Posterior cingulate gyrus (tissue), 11 donors: ENCODE measurements at regions of chr14 and their contacts with region 1.

Region 1: GRCh38 chr14:92121670-92122350 is at the starts of genes CPSF2 and NDUFB1:
- DNase-seq: peak; percentile 83 to 98 (median 88)

Region 2: GRCh38 chr14:92106143-92106926 is 15.5 kb before region 1 on chr14 and contains the start of gene ATXN3:
- intact Hi-C with region 1: loop called (anchors 1 kb)
- DNase-seq: peak; percentile 95 to 99 (median 99)

Region 3: DNA sequence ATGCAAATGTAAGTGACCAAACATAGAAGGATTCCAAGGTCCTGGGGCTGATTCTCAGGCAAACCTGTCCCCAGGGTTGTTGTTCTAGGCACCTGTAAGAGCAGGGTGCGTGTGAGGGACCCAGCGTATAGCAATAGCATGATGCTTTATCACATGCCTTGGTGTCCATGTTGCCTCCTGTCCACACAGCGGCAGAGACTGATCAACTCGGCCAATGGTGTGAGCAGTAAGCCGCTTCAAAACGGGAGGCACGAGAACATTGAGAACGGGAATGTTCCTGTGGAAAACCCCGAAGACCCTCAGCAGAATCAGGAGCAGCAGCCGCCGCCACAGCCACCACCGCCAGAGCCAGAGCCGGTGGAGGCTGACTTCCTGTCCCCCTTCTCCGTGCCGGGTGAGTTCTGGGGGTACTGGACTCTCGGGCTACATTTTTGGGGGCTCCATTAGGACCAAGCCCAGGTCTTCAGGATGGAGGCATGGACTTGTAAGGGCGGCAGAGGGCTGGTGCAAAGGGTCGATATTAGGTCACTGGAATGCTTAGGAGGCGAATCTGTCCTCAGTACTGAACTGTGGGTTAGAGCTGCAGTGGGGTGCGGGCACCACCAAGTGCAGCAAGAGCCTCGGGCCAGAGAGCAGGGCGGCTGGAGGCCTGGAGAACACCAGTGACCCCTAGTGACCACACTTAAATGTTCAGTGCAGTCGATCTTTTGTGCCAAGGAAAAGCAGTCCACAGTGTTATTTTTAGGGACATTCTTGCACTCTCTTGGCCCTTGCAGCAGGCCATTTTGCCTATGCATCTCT is 334.6 kb after region 1 on chr14:
- intact Hi-C with region 1: loop called (anchors 10 kb)
- DNase-seq: peak in 4 of 10 donors; percentile 32 to 88 (median 36)

Region 4: DNA sequence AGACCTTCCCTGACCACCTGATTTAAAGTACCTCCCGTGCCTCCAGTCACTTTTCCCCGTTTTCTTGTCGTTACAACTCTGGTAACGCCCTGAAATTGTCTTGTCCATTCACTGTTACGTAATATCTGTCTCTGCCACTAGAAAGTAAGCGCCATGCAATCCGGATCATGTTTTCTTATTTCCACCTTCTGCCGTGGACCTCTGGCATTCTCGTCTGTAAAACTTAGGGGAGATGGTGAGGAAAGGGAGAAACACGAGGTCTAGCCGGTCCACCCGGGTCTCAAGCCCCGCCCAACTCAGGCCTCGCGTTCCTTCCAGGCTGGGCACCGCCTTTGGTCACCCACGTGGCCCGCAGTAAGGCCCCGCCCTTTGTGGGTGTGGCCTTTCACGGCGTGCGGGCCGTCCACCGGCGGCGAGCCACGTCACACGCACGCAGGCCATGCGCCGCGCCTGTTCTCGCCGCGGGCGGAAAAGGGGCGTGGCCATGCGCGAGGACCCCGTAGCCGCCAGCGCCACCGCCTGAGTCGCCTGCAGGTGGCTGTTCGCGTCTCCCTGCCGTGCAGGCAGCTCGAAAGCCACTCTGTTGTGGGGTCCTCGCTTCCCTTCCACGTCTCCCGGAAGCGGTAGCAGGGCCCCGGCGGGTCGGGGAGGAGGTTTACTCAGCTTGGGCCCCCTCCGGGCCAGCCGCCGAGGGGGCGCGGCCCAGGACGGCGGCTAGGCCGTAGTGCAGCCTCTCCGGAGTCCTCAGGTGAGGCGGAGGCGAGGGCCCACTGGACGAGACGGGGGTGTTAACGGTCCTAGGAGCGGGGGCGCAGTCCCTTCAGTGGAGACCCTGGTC is 672.1 kb after region 1 on chr14 and contains the start of gene GOLGA5:
- intact Hi-C with region 1: loop called (anchors 10 kb)
- DNase-seq: peak; percentile 94 to 100 (median 98)